Panc1 (cell line): ENCODE measurements at regions of chr1 and their contacts with region 1.

Region 1: DNA sequence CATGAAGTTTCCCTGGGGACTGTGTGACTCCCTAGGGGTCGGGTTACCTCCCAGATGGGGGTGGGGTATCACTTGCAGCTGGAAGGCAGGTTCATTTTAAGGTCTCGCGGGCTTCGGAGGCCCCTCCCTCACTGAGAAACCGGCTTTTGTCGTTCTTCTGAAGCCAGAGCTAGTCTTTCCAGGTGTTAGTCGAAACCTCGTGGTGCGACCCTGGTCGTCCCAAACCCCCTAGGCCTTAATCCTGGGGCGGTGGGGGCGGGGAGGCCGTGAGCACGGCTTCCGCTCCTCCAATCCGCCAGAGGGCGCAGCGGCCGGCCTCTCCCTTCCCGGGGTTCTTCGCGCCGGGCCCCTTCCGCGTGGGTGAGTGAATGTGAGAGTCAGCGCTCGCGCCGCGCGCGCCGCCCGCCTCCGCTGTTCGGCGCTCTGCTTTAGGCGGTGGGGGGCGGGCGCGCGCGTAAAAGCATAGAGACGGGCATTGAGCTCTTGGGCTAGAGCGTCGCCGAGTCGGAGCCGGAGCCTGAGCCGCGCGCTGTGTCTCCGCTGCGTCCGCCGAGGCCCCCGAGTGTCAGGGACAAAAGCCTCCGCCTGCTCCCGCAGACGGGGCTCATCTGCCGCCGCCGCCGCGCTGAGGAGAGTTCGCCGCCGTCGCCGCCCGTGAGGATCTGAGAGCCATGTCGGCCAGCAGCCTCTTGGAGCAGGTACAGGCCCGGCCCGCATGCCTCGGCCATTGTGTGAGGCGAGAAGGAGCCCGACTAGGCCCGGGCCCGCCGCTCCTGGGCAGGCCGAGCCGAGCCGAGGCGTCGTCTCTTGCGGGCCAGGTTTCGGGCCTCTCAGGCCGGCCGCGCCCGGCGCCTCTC is at the start of gene YTHDF2:
- DNase-seq: peak; percentile 61
- ATAC-seq: peak; percentile 97
- H3K4me3 ChIP-seq: peak within 1 kb of the TSS; percentile 94 to 95
- H3K27ac ChIP-seq: peak within 1 kb of the TSS; percentile 98
- H3K4me1 ChIP-seq: peaks cover 26% of the 10 kb centered on the region
- H3K27me3 ChIP-seq: no peaks in the 10 kb centered on the region
- CTCF ChIP-seq: peak; percentile 98
- total RNA-seq, gene YTHDF2: 97.3 TPM

Region 2: GRCh38 chr1:28648474-28649198 is 88.0 kb before region 1 on chr1 and contains the start of gene RNU11:
- CTCF ChIA-PET with region 1: no interaction called
- POLR2A ChIA-PET with region 1: interaction called, 8 read pairs
- in situ Hi-C with region 1: no loop called
- intact Hi-C with region 1: loop called (anchors 1 kb)
- DNase-seq: peak; percentile 98
- ATAC-seq: peak; percentile 89
- H3K4me3 ChIP-seq: peak within 1 kb of the TSS; percentile 32 to 57
- H3K27ac ChIP-seq: peak within 1 kb of the TSS; percentile 99
- H3K4me1 ChIP-seq: peaks cover 4% of the 10 kb centered on the region; the same call in 1 of the 2 replicates
- H3K27me3 ChIP-seq: no peaks in the 10 kb centered on the region
- CTCF ChIP-seq: no peak
- total RNA-seq, gene RNU11: not detected

Region 3: GRCh38 chr1:28718586-28719331 is 17.9 kb before region 1 on chr1:
- CTCF ChIA-PET with region 1: interaction called, 7 read pairs
- POLR2A ChIA-PET with region 1: interaction called, 14 read pairs
- in situ Hi-C with region 1: no loop called
- intact Hi-C with region 1: no loop called
- DNase-seq: no peak
- ATAC-seq: peak; percentile 46; the same call in 1 of the 2 replicates
- H3K4me3 ChIP-seq: no peak overlapping the region
- H3K27ac ChIP-seq: no peak overlapping the region
- H3K4me1 ChIP-seq: no peaks in the 10 kb centered on the region
- H3K27me3 ChIP-seq: no peaks in the 10 kb centered on the region
- CTCF ChIP-seq: no peak